ENCODE measurements at regions of chr20 and their contacts with region 1.

Region 1: GRCh38 chr20:57514273-57514751 is 10.6 kb downstream of the CTCFL start:
- DNase-seq: peak; percentile 65
- ATAC-seq: peak; percentile 82
- H3K4me3 ChIP-seq: no peak overlapping the region
- H3K27ac ChIP-seq: no peak overlapping the region
- H3K4me1 ChIP-seq: peaks cover 20% of the 10 kb centered on the region
- H3K27me3 ChIP-seq: no peaks in the 10 kb centered on the region
- CTCF ChIP-seq: peak; percentile 81

Region 2: GRCh38 chr20:57290749-57291402 is 223.4 kb before region 1 on chr20:
- intact Hi-C with region 1: no loop called
- DNase-seq: no peak
- ATAC-seq: no peak
- H3K4me3 ChIP-seq: no peak overlapping the region
- H3K27ac ChIP-seq: no peak overlapping the region
- H3K4me1 ChIP-seq: peaks cover 5% of the 10 kb centered on the region
- H3K27me3 ChIP-seq: peaks cover 47% of the 10 kb centered on the region
- CTCF ChIP-seq: no peak

Region 3: GRCh38 chr20:57594092-57594911 is 80.0 kb after region 1 on chr20:
- intact Hi-C with region 1: loop called (anchors 5 kb)
- DNase-seq: peak; percentile 74
- ATAC-seq: peak; percentile 34 to 45
- H3K4me3 ChIP-seq: no peak overlapping the region
- H3K27ac ChIP-seq: no peak overlapping the region
- H3K4me1 ChIP-seq: peaks cover 8% of the 10 kb centered on the region
- H3K27me3 ChIP-seq: no peaks in the 10 kb centered on the region
- CTCF ChIP-seq: peak; percentile 94